Transverse colon (tissue), 4 donors: ENCODE measurements at regions of chr1 and their contacts with region 1.

Region 1: GRCh38 chr1:175481126-175482066 is 262.0 kb downstream of the TNR start:
- DNase-seq: no peak
- H3K4me3 ChIP-seq: no peak overlapping the region
- H3K27ac ChIP-seq: no peak overlapping the region
- H3K4me1 ChIP-seq: no peaks in the 10 kb centered on the region
- H3K27me3 ChIP-seq: no peaks in the 10 kb centered on the region
- CTCF ChIP-seq: peak; percentile 48 to 59 (median 53)
- EP300 ChIP-seq: no peak
- POLR2A ChIP-seq: no peak

Region 2: DNA sequence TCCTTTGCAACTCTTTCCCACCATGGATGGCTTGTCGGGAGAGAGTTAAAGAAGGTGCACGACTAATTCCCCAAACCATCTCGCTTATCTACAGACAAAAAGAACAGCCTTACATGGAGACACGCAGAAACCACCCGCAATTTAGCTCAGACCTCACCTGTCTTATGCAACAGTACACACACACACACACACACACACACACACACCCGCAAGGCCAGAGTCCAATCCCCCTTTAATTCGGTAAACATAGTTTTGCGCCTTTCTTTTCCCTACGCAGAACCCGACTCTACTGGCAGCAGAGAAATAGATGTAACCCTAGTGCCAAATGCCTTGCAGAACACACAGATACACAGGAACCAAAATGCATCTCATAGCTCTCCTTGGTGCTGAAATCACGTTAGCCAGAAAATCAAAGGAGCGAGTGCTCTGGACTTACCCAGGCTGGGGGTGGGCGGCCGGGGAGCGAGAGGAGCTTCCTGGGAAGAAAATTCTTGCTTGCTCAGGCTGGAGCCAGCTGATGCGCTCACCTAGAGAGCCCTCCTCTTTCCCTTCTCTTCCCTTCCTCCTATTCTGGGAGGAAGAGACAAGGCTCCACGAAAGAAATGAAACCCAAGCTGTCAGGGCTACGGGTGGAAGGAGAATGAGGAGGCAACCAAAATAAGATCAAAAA is 261.5 kb after region 1 on chr1:
- in situ Hi-C with region 1: loop called in 1 of 4 experiments (anchors 25 kb)
- intact Hi-C with region 1: no loop called
- DNase-seq: no peak
- H3K4me3 ChIP-seq: no peak overlapping the region
- H3K27ac ChIP-seq: no peak overlapping the region
- H3K4me1 ChIP-seq: no peaks in the 10 kb centered on the region
- H3K27me3 ChIP-seq: peaks cover 14% of the 10 kb centered on the region
- CTCF ChIP-seq: no peak
- EP300 ChIP-seq: no peak
- POLR2A ChIP-seq: no peak

Region 3: GRCh38 chr1:175887981-175888433 is 406.6 kb after region 1 on chr1:
- in situ Hi-C with region 1: loop called in 1 of 4 experiments (anchors 25 kb)
- intact Hi-C with region 1: no loop called
- DNase-seq: peak; percentile 57
- H3K4me3 ChIP-seq: no peak overlapping the region
- H3K27ac ChIP-seq: no peak overlapping the region
- H3K4me1 ChIP-seq: no peaks in the 10 kb centered on the region
- H3K27me3 ChIP-seq: no peaks in the 10 kb centered on the region
- CTCF ChIP-seq: peak; percentile 61 to 76 (median 72)
- EP300 ChIP-seq: no peak
- POLR2A ChIP-seq: no peak

Region 4: DNA sequence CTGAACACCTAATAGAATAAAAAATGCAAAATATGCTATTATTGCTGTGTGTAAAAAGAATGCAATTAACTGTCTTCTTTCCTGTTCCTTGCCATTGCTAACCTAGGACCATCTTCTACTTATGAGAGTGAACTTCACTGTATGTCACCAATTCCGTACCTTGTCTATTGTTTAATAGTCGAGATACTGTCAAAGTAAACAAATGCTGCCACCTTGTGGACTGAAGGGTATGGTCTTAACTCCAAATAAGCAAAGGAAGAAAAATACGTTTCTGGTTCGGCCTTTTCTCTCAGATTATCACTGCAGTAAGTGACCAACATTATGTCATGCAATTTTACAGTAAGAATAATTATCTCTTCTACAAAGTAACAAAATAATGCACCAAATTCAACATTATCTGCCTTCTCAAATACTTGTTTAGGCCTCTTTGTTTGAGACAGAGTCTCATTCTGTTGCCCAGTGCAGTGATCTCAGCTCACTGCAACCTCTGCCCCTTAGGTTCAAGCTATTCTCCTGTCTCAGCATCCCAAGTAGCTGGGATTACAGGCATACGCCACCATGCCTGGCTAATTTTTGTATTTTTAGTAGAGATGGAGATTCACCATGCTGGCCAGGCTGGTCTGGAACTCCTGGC is 592.2 kb after region 1 on chr1:
- in situ Hi-C with region 1: loop called in 2 of 4 experiments (anchors 25 kb)
- intact Hi-C with region 1: no loop called
- DNase-seq: no peak
- H3K4me3 ChIP-seq: no peak overlapping the region
- H3K27ac ChIP-seq: no peak overlapping the region
- H3K4me1 ChIP-seq: no peaks in the 10 kb centered on the region
- H3K27me3 ChIP-seq: no peaks in the 10 kb centered on the region
- CTCF ChIP-seq: peak; percentile 39 to 59 (median 58)
- EP300 ChIP-seq: no peak
- POLR2A ChIP-seq: no peak